Spleen (tissue), 13 donors: ENCODE measurements at regions of chr2 and their contacts with region 1.

Region 1: GRCh38 chr2:102615622-102616436 is 3.5 kb upstream of the SLC9A2 start:
- DNase-seq: peak; percentile 88
- H3K4me3 ChIP-seq: no peak overlapping the region
- H3K27ac ChIP-seq: no peak overlapping the region
- H3K4me1 ChIP-seq: peaks cover 9 to 23% (median 17%) of the 10 kb centered on the region in 6 donors
- H3K27me3 ChIP-seq: peaks cover 4 to 59% (median 40%) of the 10 kb centered on the region in 7 donors
- CTCF ChIP-seq: peak; percentile 16 to 79 (median 60)
- POLR2A ChIP-seq: no peak

Region 2: DNA sequence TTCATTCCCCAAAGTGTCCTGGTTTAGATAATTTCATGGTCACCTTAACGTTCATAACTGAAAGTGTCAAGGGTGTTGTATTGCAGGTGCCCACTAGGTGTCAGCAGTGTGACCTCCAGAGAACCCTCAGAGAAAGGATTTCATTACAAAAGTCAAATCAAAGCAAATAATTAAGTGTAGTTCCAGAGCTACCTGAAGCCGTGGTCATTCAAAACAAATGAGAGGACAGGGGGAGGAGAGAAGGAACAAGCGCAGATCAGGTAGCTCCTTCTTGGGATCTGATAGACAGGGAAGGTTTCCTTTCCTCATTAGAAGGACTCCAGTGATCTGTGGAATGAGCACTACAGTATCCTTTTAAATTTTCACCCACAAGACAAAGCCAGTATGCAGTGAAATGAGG is 142.8 kb before region 1 on chr2 and contains the start of gene SLC9A4:
- intact Hi-C with region 1: loop called (anchors 5 kb)
- DNase-seq: no peak
- H3K4me3 ChIP-seq: no peak within 1 kb of the TSS
- H3K27ac ChIP-seq: no peak within 1 kb of the TSS
- H3K4me1 ChIP-seq: peaks cover 0 to 5% (median 0%) of the 10 kb centered on the region in 6 donors
- H3K27me3 ChIP-seq: peaks cover 0 to 29% (median 0%) of the 10 kb centered on the region in 7 donors
- CTCF ChIP-seq: peak; percentile 47 to 82 (median 78)
- POLR2A ChIP-seq: no peak
- total RNA-seq, gene SLC9A4: 0.10 TPM in 1 of 7 donors, not detected in the others